Mammary epithelial cell (primary cell): ENCODE measurements at regions of chr1 and their contacts with region 1.

Region 1: DNA sequence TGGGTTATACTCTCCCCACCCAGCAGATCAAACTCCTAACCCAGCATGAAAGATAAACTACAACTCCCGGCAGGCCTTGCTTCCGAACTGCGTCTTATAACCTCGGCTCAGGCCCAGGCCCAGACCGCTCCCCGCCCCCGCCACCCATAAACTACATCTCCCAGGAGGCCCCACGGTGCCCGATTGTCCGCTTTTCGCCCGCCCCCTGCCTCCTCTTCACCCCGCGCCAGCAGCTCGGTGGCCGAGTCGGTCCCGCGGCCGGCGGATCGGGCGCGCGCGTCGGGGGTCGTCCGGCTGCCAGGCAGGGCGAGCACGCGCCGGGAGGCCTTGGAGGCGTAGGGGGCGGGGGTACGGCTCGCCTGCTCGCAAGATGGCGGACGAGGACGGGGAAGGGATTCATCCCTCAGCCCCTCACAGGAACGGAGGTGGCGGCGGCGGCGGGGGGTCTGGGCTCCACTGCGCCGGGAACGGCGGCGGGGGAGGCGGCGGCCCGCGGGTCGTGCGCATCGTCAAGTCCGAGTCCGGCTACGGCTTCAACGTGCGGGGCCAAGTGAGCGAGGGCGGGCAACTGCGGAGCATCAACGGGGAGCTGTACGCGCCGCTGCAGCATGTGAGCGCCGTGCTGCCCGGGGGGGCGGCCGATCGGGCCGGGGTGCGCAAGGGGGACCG is at the start of gene SNX27:
- DNase-seq: peak; percentile 84
- H3K4me3 ChIP-seq: peak within 1 kb of the TSS; percentile 69 to 86 (median 85)
- H3K27ac ChIP-seq: peak within 1 kb of the TSS; percentile 42
- H3K4me1 ChIP-seq: peaks cover 40% of the 10 kb centered on the region
- H3K27me3 ChIP-seq: no peaks in the 10 kb centered on the region
- CTCF ChIP-seq: no peak
- total RNA-seq, gene SNX27: 22.7 to 25.5 TPM

Region 2: DNA sequence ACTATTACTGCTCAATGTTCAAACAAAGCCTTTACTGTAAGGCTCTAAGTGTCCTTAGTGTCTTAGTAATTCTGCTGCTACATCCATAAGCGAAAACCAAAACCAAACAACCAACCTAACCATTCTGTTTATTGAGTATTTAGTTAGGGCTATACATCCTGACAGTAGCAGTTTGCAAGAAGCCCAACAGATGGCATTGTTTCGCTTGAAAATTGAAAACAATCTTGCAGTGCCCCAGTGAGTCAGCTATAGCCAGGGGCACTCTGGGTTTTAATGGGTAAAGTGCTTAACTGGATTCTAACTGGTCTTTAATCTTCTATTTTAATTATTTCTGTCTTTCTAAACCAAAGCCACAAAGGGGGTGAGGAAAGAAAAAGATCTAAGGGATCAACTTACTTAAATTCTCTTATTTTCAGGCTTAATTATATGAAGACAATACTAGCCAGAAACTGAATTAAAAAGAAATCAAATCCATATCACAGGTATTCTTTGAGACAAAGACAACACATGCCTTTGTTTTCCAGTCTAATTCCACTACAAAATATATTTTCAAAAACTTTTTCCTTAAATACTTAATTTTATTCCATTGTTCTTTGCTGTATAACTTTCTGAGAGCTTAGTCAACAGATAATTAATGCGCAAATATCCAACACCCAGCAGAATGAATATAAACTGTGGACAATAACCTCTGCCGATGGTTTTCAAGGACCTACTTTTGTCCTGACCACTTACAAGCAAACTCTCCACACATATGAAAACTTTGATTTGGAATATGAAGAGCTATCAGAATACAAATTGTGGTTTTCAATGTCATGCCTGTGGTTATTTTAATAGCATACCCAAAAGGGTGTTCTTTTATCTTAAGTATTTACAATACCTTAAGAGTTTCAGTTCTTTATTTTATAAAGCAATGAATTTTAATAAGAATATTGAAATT is 167.9 kb before region 1 on chr1:
- CTCF ChIA-PET with region 1: no interaction called
- dilution Hi-C with region 1: no loop called
- in situ Hi-C with region 1: no loop called
- intact Hi-C with region 1: loop called (anchors 5 kb)
- DNase-seq: peak; percentile 77
- H3K4me3 ChIP-seq: no peak overlapping the region
- H3K27ac ChIP-seq: no peak overlapping the region
- H3K4me1 ChIP-seq: peaks cover 10% of the 10 kb centered on the region
- H3K27me3 ChIP-seq: no peaks in the 10 kb centered on the region
- CTCF ChIP-seq: peak; percentile 77 to 85

Region 3: GRCh38 chr1:151534665-151535278 is 77.2 kb before region 1 on chr1:
- CTCF ChIA-PET with region 1: no interaction called
- dilution Hi-C with region 1: no loop called
- in situ Hi-C with region 1: no loop called
- intact Hi-C with region 1: no loop called
- DNase-seq: peak; percentile 57
- H3K4me3 ChIP-seq: no peak overlapping the region
- H3K27ac ChIP-seq: no peak overlapping the region
- H3K4me1 ChIP-seq: peaks cover 16% of the 10 kb centered on the region
- H3K27me3 ChIP-seq: no peaks in the 10 kb centered on the region
- CTCF ChIP-seq: peak; percentile 95 to 98

Region 4: GRCh38 chr1:151680812-151681211 is 68.8 kb after region 1 on chr1:
- CTCF ChIA-PET with region 1: no interaction called
- dilution Hi-C with region 1: no loop called
- in situ Hi-C with region 1: no loop called
- intact Hi-C with region 1: loop called (anchors 5 kb)
- DNase-seq: peak; percentile 78
- H3K4me3 ChIP-seq: peak overlapping the region in 1 of 3 experiments; percentile 10
- H3K27ac ChIP-seq: peak overlapping the region; percentile 85
- H3K4me1 ChIP-seq: peaks cover 17% of the 10 kb centered on the region
- H3K27me3 ChIP-seq: no peaks in the 10 kb centered on the region
- CTCF ChIP-seq: no peak

Region 5: GRCh38 chr1:152585586-152585985 is 973.6 kb after region 1 on chr1:
- CTCF ChIA-PET with region 1: no interaction called
- dilution Hi-C with region 1: no loop called
- in situ Hi-C with region 1: no loop called
- intact Hi-C with region 1: no loop called
- DNase-seq: no peak
- H3K4me3 ChIP-seq: no peak overlapping the region
- H3K27ac ChIP-seq: no peak overlapping the region
- H3K4me1 ChIP-seq: peaks cover 1% of the 10 kb centered on the region
- H3K27me3 ChIP-seq: no peaks in the 10 kb centered on the region
- CTCF ChIP-seq: peak; percentile 30 to 47